Activated naive CD4-positive, alpha-beta T cell treated with anti-CD3 and anti-CD28 coated beads, Interleukin-2, amount 10 ng/mL, durations not matched to agents 7 days and 5 days (primary cell): ENCODE measurements at regions of chr2 and their contacts with region 1.

Region 1: GRCh38 chr2:85266146-85267041 is 61.4 kb downstream of the TGOLN2 start:
- DNase-seq: peak; percentile 81
- H3K4me3 Mint-ChIP-seq: no peak overlapping the region
- H3K27ac Mint-ChIP-seq: no peak overlapping the region
- H3K4me1 Mint-ChIP-seq: no peaks in the 10 kb centered on the region
- H3K27me3 Mint-ChIP-seq: peaks cover 39% of the 10 kb centered on the region

Region 2: DNA sequence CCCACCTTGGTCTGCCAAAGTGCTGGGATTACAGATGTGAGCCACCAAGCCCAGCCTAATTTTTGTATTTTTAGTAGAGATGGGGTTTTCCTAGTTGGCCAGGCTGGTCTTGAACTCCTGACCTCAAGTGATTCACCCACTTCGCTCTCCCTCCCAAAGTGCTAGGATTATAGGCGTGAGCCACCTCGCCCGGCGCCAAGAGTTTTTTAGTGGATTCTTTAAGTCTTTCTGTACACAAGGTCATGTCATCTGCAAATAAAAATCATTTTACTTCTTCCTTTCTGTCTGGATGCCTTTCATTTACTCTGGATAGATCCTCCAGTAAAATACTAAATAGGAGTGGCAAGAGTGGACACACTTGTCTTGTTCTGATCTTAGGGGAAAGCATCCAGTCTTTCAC is 233.8 kb before region 1 on chr2:
- CTCF ChIA-PET with region 1: no interaction called
- DNase-seq: no peak
- H3K4me3 Mint-ChIP-seq: no peak overlapping the region
- H3K27ac Mint-ChIP-seq: no peak overlapping the region
- H3K4me1 Mint-ChIP-seq: peaks cover 6% of the 10 kb centered on the region
- H3K27me3 Mint-ChIP-seq: no peaks in the 10 kb centered on the region

Region 3: GRCh38 chr2:85162746-85163301 is 103.6 kb before region 1 on chr2:
- CTCF ChIA-PET with region 1: no interaction called
- DNase-seq: no peak
- H3K4me3 Mint-ChIP-seq: no peak overlapping the region
- H3K27ac Mint-ChIP-seq: no peak overlapping the region
- H3K4me1 Mint-ChIP-seq: no peaks in the 10 kb centered on the region
- H3K27me3 Mint-ChIP-seq: peaks cover 32% of the 10 kb centered on the region

Region 4: DNA sequence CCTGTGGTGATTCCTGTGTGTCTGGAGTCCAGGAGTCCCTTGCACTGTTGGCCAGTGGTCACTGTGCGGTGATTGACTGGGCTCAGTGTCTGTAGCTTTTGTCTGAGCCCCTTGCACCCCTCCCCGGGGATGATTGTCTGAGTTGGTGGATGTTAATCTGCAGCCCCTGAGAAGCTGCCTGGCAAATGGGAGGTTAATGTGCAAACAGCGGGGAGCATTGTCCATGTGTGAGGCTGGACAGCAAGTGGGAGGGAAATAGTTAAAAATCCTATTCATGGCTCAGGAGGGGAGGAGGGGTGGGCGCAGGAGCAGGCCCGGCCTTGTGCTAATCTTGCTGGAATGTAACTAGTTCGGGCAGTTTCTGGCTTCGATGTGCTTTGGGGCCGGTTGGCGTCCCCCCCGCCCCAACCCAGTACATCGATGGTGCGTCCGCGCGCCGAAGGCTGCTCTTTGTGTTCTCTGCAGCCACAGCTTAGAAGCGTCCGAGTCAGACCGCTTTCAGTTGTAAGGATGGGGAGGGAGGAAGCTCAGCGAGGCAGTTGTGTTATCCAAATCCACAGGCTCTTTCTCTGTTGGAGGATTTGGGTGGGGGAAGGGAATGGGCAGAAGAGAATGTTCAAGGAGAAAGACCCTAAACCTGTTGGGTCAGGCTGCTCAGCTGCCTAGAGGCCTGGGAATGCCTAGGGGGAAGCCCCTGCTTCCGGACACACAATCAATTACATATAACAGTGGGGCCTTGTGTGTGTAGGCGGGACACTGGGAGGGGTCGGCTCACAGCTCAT is 10.4 kb before region 1 on chr2:
- CTCF ChIA-PET with region 1: interaction called, 15 read pairs
- DNase-seq: no peak
- H3K4me3 Mint-ChIP-seq: no peak overlapping the region
- H3K27ac Mint-ChIP-seq: no peak overlapping the region
- H3K4me1 Mint-ChIP-seq: no peaks in the 10 kb centered on the region
- H3K27me3 Mint-ChIP-seq: peaks cover 13% of the 10 kb centered on the region

Region 5: DNA sequence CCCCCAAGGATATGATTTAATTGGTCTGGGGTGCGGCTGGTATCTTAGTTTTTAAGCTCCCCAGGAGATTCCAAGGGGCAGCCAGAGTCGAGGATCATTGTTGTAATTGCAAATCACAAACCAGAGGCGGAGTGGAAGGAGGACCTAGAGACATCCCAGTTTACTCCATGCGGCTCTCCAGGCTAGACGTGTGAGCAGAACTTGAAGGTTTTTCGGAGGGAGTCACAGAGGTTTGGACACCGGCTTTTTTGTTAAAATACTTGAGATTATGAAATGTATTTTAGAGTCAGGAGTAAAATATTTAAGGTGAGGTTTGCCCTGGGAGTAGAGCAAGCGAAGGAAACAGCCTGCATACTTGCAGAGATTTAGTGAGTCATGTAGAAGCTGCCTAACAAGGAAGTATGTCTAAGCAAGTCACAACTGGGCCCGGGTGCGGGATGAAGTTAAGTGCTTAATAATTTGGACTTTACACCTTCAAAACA is 21.9 kb after region 1 on chr2:
- CTCF ChIA-PET with region 1: interaction called, 30 read pairs
- DNase-seq: no peak
- H3K4me3 Mint-ChIP-seq: no peak overlapping the region
- H3K27ac Mint-ChIP-seq: no peak overlapping the region
- H3K4me1 Mint-ChIP-seq: peaks cover 32% of the 10 kb centered on the region
- H3K27me3 Mint-ChIP-seq: peaks cover 4% of the 10 kb centered on the region